CD8-positive, alpha-beta T cell (primary cell): ENCODE measurements at regions of chr17 and their contacts with region 1.

Region 1: DNA sequence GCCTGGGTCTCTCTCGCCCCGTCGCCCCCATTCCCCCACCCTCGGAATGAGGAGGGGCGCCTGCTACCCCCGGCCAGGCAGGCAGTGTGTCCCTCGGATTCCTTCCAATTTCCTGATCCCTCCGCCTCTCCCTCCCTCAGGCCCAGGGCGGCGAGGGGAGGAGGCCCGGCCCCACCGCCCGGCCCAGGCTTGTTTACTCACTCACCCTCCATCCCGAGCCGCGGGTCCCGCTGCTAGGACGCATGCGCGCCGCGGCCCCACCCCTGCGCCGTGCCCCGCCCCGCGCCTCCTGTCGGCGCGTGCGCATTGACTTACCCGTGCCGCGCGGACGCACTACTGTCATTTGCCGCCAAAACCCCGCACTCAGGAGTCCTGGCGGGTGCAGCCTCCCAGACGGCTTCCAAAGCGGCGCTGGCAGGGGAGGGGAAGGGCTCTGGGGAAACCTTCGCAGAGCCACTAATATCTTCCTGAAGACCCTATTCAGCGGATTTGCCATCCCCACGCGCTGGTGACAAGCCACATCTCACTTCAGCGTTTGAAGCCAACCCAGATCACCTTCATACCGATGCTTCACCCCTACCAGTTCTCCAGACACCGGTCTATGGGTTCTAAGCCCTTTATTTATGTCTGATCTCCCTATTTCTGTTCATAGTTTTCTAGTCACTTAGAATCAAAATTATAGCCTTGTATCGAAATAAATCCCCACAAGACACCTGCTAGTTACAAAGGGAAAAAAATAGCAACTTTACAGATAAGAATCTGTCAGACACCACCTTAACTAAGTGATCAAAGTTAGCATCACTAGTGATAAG is at the start of gene EZH1:
- DNase-seq: peak; percentile 82 to 96 (median 90)
- ATAC-seq: peak; percentile 92
- H3K4me3 ChIP-seq: peak within 1 kb of the TSS; percentile 72 to 73
- H3K4me3 Mint-ChIP-seq: peak within 1 kb of the TSS; percentile 98
- H3K27ac ChIP-seq: peak within 1 kb of the TSS; percentile 62 to 79
- H3K27ac Mint-ChIP-seq: peak within 1 kb of the TSS; percentile 96
- H3K4me1 ChIP-seq: peaks cover 17% of the 10 kb centered on the region
- H3K4me1 Mint-ChIP-seq: peaks cover 31% of the 10 kb centered on the region
- H3K27me3 ChIP-seq: peaks cover 0 to 4% of the 10 kb centered on the region in 2 experiments
- H3K27me3 Mint-ChIP-seq: peaks cover 13% of the 10 kb centered on the region
- CTCF ChIP-seq: no peak
- total RNA-seq, gene EZH1: 59.2 to 63.4 TPM

Region 2: DNA sequence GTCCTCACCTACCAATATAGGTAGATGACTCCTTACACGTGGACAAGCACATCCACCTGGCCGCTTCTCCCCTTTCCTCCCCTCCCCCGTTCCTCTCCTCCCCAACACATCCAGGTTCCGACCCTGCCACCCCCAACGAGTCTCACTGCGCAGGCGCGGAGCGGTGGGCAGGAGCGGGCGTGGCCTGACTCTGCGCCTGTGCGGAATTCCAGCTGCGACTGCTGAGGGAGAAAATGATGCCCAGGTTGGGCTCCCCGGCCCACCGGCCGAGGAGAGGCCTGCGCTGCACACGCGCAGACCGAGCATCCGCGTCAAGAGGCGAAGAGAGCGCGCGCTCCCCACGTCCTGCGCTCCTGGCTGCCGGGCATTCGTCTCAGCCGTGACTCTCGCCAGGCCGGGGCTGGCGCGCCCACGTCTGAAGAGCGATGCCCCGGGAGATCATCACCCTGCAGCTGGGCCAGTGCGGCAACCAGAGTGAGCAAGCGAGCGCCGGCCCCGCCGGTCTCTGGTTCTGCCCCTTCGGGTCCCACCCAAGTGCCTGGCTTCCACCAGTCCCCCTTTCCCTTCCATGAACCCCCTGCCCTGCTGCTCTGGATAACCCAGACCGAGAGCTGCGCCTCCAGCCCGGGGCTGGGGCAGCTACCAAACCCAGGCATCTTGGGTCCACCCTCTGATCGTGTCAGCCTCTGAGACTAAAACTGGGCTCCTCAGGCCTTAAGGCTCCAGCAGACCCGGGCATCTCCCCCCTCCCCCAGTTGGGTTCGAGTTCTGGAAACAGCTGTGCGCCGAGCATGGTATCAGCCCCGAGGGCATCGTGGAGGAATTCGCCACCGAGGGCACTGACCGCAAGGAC is 85.7 kb before region 1 on chr17 and contains the start of gene TUBG2:
- CTCF ChIA-PET with region 1: no interaction called
- POLR2A ChIA-PET with region 1: no interaction called
- intact Hi-C with region 1: no loop called
- DNase-seq: peak; percentile 43 to 84 (median 73)
- ATAC-seq: peak; percentile 80
- H3K4me3 ChIP-seq: peak within 1 kb of the TSS; percentile 72 to 92
- H3K4me3 Mint-ChIP-seq: peak within 1 kb of the TSS; percentile 91
- H3K27ac ChIP-seq: peak within 1 kb of the TSS; percentile 5 to 45
- H3K27ac Mint-ChIP-seq: peak within 1 kb of the TSS; percentile 84
- H3K4me1 ChIP-seq: peaks cover 5% of the 10 kb centered on the region
- H3K4me1 Mint-ChIP-seq: peaks cover 14% of the 10 kb centered on the region
- H3K27me3 ChIP-seq: no peaks in the 10 kb centered on the region
- H3K27me3 Mint-ChIP-seq: peaks cover 8% of the 10 kb centered on the region
- CTCF ChIP-seq: no peak
- total RNA-seq, gene TUBG2: 7.4 to 10.6 TPM

Region 3: GRCh38 chr17:42798383-42799380 is 53.7 kb after region 1 on chr17 and contains the starts of genes CNTD1 and COA3:
- CTCF ChIA-PET with region 1: interaction called, 5 read pairs
- POLR2A ChIA-PET with region 1: no interaction called
- intact Hi-C with region 1: loop called in 1 of 2 experiments (anchors 1 kb)
- DNase-seq: peak; percentile 52 to 84 (median 77)
- ATAC-seq: peak; percentile 98
- H3K4me3 ChIP-seq: peak within 1 kb of the TSS; percentile 67 to 75
- H3K4me3 Mint-ChIP-seq: peak within 1 kb of the TSS; percentile 93
- H3K27ac ChIP-seq: peak within 1 kb of the TSS in 1 of 2 experiments; percentile 47
- H3K27ac Mint-ChIP-seq: peak within 1 kb of the TSS; percentile 77
- H3K4me1 ChIP-seq: peaks cover 13% of the 10 kb centered on the region
- H3K4me1 Mint-ChIP-seq: peaks cover 28% of the 10 kb centered on the region
- H3K27me3 ChIP-seq: no peaks in the 10 kb centered on the region
- H3K27me3 Mint-ChIP-seq: no peaks in the 10 kb centered on the region
- CTCF ChIP-seq: no peak
- total RNA-seq, gene CNTD1: not detected
- total RNA-seq, gene COA3: 4.0 to 5.6 TPM